Colonic mucosa (tissue), 4 donors: ENCODE measurements at regions of chr12 and their contacts with region 1.

Region 1: GRCh38 chr12:97404543-97404942 is 58.1 kb upstream of the RMST start:
- DNase-seq: peak; percentile 20
- H3K4me3 ChIP-seq: no peak overlapping the region
- H3K27ac ChIP-seq: no peak overlapping the region
- H3K4me1 ChIP-seq: no peaks in the 10 kb centered on the region
- H3K27me3 ChIP-seq: no peaks in the 10 kb centered on the region
- CTCF ChIP-seq: peak; percentile 55

Region 2: GRCh38 chr12:97148941-97149559 is 255.5 kb before region 1 on chr12:
- intact Hi-C with region 1: loop called (anchors 10 kb)
- DNase-seq: peak; percentile 42
- H3K4me3 ChIP-seq: no peak overlapping the region
- H3K27ac ChIP-seq: no peak overlapping the region
- H3K4me1 ChIP-seq: no peaks in the 10 kb centered on the region
- H3K27me3 ChIP-seq: no peaks in the 10 kb centered on the region
- CTCF ChIP-seq: peak; percentile 66

Region 3: DNA sequence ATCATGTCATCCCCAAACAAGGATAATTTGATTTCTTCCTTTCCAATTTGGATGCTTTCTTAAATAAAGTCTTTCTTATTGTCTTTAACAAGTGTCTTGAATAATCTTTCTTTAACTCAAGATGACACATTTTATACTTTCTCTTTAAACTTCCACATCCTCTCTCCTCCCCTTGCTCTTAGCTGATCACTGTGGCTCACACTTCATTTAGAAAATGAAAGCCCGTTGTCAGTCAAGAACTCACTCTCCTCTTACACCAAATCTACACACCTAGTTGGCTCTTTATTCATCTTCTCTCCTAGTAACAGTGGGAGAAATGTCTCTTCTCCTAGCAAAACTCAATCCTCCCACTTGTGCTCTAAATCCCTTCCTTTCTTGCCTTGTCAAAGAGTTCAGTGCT is 47.7 kb after region 1 on chr12:
- intact Hi-C with region 1: no loop called
- DNase-seq: no peak
- H3K4me3 ChIP-seq: no peak overlapping the region
- H3K27ac ChIP-seq: no peak overlapping the region
- H3K4me1 ChIP-seq: no peaks in the 10 kb centered on the region
- H3K27me3 ChIP-seq: no peaks in the 10 kb centered on the region
- CTCF ChIP-seq: no peak